ENCODE measurements at regions of chr19 and their contacts with region 1.

Region 1: DNA sequence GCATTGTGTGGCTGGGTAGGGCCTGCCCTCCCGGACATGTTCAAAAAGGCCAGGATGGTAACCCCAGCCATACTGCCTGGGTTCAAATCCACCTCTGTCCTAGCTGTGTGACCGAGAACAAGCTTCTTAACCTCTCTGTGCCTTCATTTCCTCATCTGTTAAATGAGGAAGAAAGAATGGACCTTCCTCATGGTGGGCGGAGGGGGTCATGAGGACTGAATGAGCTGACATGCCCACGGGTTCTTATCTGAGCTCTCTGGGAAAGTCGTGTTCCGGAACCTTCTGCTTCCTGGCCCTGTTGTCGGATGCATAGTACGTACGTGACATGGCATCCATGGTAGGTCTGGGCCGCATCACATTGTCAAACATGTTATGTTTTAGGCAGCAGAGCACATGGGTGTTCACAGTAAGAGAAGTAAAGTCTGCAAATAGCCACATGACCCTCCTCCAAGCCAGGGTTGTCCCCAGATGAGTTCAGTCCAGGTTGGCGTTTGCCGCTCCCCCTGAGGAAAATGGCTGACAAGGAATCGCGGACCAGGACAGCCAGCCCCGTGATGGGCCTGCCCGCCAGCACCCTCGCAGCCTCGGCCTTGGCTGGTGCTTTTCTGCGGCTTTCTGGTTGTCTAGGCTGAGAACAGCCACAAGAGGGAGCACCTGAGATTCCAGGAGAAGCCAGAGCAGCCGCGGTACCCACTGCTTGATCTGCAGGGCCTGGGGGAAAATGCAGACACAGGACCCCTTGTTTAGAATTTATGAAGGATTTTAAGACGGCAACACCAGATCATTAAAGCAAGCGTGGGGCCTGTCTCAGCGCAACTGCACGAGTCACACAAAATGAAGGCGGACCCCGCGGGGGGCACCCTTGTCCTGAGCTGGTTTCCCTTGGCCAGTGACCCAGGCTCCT is 2.4 kb upstream of the NTN5 start:
- DNase-seq: peak; percentile 63 to 78
- ATAC-seq: peak; percentile 91 to 95
- H3K4me3 ChIP-seq: no peak overlapping the region
- H3K27ac ChIP-seq: peak overlapping the region in 1 of 4 donors; percentile 57
- H3K4me1 ChIP-seq: peaks cover 4 to 11% of the 10 kb centered on the region in 2 donors
- H3K27me3 ChIP-seq: no peaks in the 10 kb centered on the region
- CTCF ChIP-seq: peak; percentile 80 to 93 (median 89)
- POLR2A ChIP-seq: no peak

Region 2: GRCh38 chr19:48713864-48714758 is 38.9 kb after region 1 on chr19:
- in situ Hi-C with region 1: no loop called
- intact Hi-C with region 1: loop called (anchors 5 kb)
- DNase-seq: peak; percentile 98 to 99
- ATAC-seq: peak; percentile 88 to 94
- H3K4me3 ChIP-seq: peak overlapping the region; percentile 47 to 65 (median 60)
- H3K27ac ChIP-seq: peak overlapping the region; percentile 88 to 98 (median 94)
- H3K4me1 ChIP-seq: peaks cover 39 to 43% of the 10 kb centered on the region in 2 donors
- H3K27me3 ChIP-seq: no peaks in the 10 kb centered on the region
- CTCF ChIP-seq: no peak
- POLR2A ChIP-seq: peak; percentile 60 to 73

Region 3: GRCh38 chr19:48842789-48843162 is 167.6 kb after region 1 on chr19:
- in situ Hi-C with region 1: loop called in 1 of 4 experiments (anchors 10 kb)
- intact Hi-C with region 1: loop called (anchors 10 kb)
- DNase-seq: peak in 1 of 2 donors; percentile 27
- ATAC-seq: peak; percentile 43 to 75
- H3K4me3 ChIP-seq: no peak overlapping the region
- H3K27ac ChIP-seq: no peak overlapping the region
- H3K4me1 ChIP-seq: no peaks in the 10 kb centered on the region
- H3K27me3 ChIP-seq: no peaks in the 10 kb centered on the region
- CTCF ChIP-seq: peak; percentile 70 to 93 (median 86)
- POLR2A ChIP-seq: no peak

Measured in gastrocnemius medialis (tissue), 4 donors.